Activated CD4-positive, alpha-beta memory T cell treated with anti-CD3 and anti-CD28 coated beads for 36 hours (primary cell): ENCODE measurements at regions of chr13 and their contacts with region 1.

Region 1: DNA sequence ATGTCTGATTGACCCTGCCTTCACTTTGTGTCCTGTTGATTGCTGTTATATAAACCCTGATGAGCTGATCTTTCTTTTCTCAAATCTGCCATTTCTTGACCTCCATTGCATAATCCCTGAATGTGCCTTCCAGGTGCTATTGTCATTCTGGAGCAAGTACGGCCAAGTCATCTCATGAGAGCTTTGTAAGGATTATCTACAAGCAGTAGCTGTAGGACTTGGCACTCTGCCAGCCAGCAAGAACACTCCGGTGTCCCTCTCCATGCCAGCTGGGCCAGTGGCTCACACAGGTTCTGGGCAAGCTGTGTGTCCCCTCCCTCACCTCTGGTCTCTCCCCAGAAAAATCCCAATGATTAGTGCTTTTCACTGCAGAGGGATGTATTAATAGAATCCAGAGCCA is 348.1 kb downstream of the FOXO1 start:
- DNase-seq: no peak
- H3K4me3 Mint-ChIP-seq: no peak overlapping the region
- H3K27ac Mint-ChIP-seq: no peak overlapping the region
- H3K4me1 Mint-ChIP-seq: peaks cover 60% of the 10 kb centered on the region
- H3K27me3 Mint-ChIP-seq: no peaks in the 10 kb centered on the region

Region 2: GRCh38 chr13:40069173-40070044 is 249.0 kb before region 1 on chr13:
- CTCF ChIA-PET with region 1: interaction called, 5 read pairs
- POLR2A ChIA-PET with region 1: no interaction called
- intact Hi-C with region 1: loop called (anchors 10 kb)
- DNase-seq: peak; percentile 83
- H3K4me3 Mint-ChIP-seq: no peak overlapping the region
- H3K27ac Mint-ChIP-seq: no peak overlapping the region
- H3K4me1 Mint-ChIP-seq: peaks cover 24% of the 10 kb centered on the region
- H3K27me3 Mint-ChIP-seq: no peaks in the 10 kb centered on the region

Region 3: GRCh38 chr13:40251343-40252032 is 66.9 kb before region 1 on chr13:
- CTCF ChIA-PET with region 1: no interaction called
- POLR2A ChIA-PET with region 1: no interaction called
- intact Hi-C with region 1: loop called (anchors 2 kb)
- DNase-seq: peak; percentile 13
- H3K4me3 Mint-ChIP-seq: no peak overlapping the region
- H3K27ac Mint-ChIP-seq: peak overlapping the region; percentile 70
- H3K4me1 Mint-ChIP-seq: peaks cover 42% of the 10 kb centered on the region
- H3K27me3 Mint-ChIP-seq: no peaks in the 10 kb centered on the region

Region 4: DNA sequence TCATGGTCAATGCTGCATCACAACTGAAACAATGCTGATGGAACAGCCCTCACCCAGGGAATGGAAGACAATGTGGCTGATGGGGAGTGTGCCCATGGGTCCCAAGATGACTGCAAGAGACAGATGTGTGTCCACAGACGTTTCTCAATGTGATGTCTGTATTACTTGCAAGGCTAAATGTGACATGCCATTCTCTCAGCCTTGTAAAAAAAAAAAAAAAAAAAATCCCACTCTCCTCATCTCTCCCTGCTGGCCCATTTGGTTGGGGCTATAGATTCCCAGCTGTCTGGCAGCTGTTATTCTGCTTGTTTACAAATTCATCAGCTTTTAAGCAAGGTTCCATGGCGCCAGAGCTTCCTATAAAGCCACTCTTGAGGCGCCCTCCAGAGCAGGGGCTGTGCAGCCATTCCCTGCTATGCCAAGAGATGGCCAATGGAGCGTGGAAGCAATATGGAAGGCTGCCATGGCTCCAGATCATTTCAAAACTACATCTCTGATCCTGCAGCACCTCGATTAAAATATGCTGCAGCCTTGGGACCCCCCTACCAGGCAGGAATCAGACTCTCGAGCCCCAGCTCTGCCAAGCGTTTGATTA is 53.3 kb after region 1 on chr13:
- CTCF ChIA-PET with region 1: no interaction called
- POLR2A ChIA-PET with region 1: no interaction called
- intact Hi-C with region 1: loop called (anchors 2 kb)
- DNase-seq: no peak
- H3K4me3 Mint-ChIP-seq: no peak overlapping the region
- H3K27ac Mint-ChIP-seq: no peak overlapping the region
- H3K4me1 Mint-ChIP-seq: peaks cover 34% of the 10 kb centered on the region
- H3K27me3 Mint-ChIP-seq: peaks cover 1% of the 10 kb centered on the region

Region 5: DNA sequence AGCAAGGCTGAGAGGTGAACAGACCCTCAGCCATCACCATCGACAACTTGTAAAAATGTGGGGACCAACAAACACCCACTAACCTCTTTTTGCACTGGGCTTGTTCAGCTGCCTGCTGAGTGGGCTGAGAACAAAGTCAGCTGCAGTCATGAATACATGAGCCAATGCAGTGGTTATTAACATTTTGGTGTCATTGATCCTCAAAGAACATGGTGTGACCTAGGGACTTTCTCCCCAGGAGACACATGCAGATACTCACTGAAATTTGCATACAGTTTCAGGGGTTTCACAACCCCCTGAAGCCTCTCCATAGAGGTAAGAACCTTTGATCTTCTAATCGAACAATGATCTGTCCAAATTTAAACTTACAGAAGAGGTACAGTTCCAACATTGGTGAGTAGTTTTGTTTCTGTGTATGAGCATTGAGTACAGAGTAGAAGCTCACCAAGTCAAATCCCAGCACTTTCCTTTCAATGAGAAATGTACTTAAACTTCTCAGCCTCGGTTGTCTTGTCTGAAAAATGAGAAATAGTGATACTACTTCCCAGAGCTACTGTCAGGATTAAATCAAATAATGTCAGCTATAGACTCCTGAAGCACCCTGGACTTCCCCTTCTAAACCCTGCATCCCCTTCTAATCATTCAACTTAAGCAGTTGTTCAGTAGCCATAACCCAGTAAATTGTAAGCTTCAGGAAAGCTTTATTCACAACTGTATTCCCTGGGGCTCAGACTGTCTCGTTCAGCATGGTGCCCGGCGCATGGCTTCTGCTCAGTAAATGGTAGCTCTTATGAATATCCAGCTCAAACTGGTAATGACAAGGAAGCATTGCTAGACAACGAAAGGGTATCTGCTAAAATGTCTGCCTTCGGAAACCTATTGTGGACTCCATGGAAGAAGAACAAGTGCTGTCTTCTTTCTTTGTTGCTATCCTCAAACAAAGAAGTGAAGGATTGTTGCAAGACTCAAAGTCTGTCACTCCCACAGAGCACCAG is 199.4 kb after region 1 on chr13:
- CTCF ChIA-PET with region 1: no interaction called
- POLR2A ChIA-PET with region 1: no interaction called
- intact Hi-C with region 1: loop called (anchors 5 kb)
- DNase-seq: peak; percentile 48
- H3K4me3 Mint-ChIP-seq: peak overlapping the region; percentile 61
- H3K27ac Mint-ChIP-seq: peak overlapping the region; percentile 86
- H3K4me1 Mint-ChIP-seq: peaks cover 71% of the 10 kb centered on the region
- H3K27me3 Mint-ChIP-seq: no peaks in the 10 kb centered on the region

Region 6: DNA sequence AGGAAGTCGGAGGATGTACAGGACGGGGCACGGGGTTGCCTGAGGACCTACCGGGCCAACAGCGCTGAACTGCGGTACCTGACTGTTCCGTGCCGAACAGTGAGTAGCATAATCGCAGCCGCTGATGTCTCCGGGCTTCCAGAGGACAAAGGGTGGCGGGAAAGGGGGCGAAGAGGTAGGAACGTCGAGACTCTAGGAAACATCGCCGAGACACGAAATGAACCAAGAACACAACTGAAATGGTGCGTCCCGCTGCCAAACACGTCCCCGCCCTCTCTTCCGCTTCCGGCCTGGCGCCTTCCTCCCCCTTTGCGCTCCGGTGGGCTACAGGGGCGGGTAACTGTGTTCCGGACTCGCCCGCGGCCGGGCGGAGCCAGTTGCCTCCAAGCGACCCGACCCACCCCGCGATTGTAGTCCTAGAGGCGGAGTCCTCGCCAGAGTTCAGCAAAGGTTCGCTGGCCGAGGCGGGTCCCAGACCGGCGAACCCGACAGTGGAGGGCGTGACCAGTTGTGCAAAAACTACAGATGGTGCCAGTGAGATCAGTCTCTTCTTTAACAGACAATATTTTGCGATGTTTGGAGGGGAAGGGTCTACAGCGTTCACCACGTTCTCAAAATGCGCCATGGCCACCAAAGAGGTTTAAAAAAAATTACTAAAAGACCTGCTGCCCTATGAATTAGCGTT is 452.7 kb after region 1 on chr13 and contains the start of gene MRPS31:
- CTCF ChIA-PET with region 1: no interaction called
- POLR2A ChIA-PET with region 1: no interaction called
- intact Hi-C with region 1: loop called (anchors 10 kb)
- DNase-seq: peak; percentile 97
- H3K4me3 Mint-ChIP-seq: peak within 1 kb of the TSS; percentile 100
- H3K27ac Mint-ChIP-seq: peak within 1 kb of the TSS; percentile 94
- H3K4me1 Mint-ChIP-seq: peaks cover 34% of the 10 kb centered on the region
- H3K27me3 Mint-ChIP-seq: no peaks in the 10 kb centered on the region
- total RNA-seq, gene MRPS31: 35.6 to 40.4 TPM